CD8-positive, alpha-beta T cell (primary cell): ENCODE measurements at regions of chr14 and their contacts with region 1.

Region 1: GRCh38 chr14:100078991-100079725 is 13.9 kb downstream of the EVL start:
- DNase-seq: peak; percentile 74 to 95 (median 88)
- ATAC-seq: peak; percentile 66
- H3K4me3 ChIP-seq: peak overlapping the region; percentile 27
- H3K4me3 Mint-ChIP-seq: peak overlapping the region; percentile 77
- H3K27ac ChIP-seq: peak overlapping the region; percentile 55 to 63
- H3K27ac Mint-ChIP-seq: peak overlapping the region; percentile 99
- H3K4me1 ChIP-seq: peaks cover 95% of the 10 kb centered on the region
- H3K4me1 Mint-ChIP-seq: peaks cover 97% of the 10 kb centered on the region
- H3K27me3 ChIP-seq: no peaks in the 10 kb centered on the region
- H3K27me3 Mint-ChIP-seq: no peaks in the 10 kb centered on the region
- CTCF ChIP-seq: no peak

Region 2: GRCh38 chr14:99430465-99430864 is 648.7 kb before region 1 on chr14:
- CTCF ChIA-PET with region 1: no interaction called
- POLR2A ChIA-PET with region 1: no interaction called
- intact Hi-C with region 1: no loop called
- DNase-seq: peak in 3 of 9 experiments; percentile 31 to 42 (median 38)
- ATAC-seq: peak; percentile 56
- H3K4me3 ChIP-seq: no peak overlapping the region
- H3K4me3 Mint-ChIP-seq: no peak overlapping the region
- H3K27ac ChIP-seq: no peak overlapping the region
- H3K27ac Mint-ChIP-seq: no peak overlapping the region
- H3K4me1 ChIP-seq: peaks cover 2% of the 10 kb centered on the region
- H3K4me1 Mint-ChIP-seq: peaks cover 23% of the 10 kb centered on the region
- H3K27me3 ChIP-seq: no peaks in the 10 kb centered on the region
- H3K27me3 Mint-ChIP-seq: no peaks in the 10 kb centered on the region
- CTCF ChIP-seq: no peak

Region 3: GRCh38 chr14:100015251-100015655 is 63.9 kb before region 1 on chr14:
- CTCF ChIA-PET with region 1: no interaction called
- POLR2A ChIA-PET with region 1: no interaction called
- intact Hi-C with region 1: no loop called
- DNase-seq: no peak
- ATAC-seq: no peak
- H3K4me3 ChIP-seq: no peak overlapping the region
- H3K4me3 Mint-ChIP-seq: no peak overlapping the region
- H3K27ac ChIP-seq: no peak overlapping the region
- H3K27ac Mint-ChIP-seq: no peak overlapping the region
- H3K4me1 ChIP-seq: no peaks in the 10 kb centered on the region
- H3K4me1 Mint-ChIP-seq: peaks cover 7% of the 10 kb centered on the region
- H3K27me3 ChIP-seq: no peaks in the 10 kb centered on the region
- H3K27me3 Mint-ChIP-seq: no peaks in the 10 kb centered on the region
- CTCF ChIP-seq: no peak

Region 4: GRCh38 chr14:100056964-100057795 is 22.0 kb before region 1 on chr14:
- CTCF ChIA-PET with region 1: interaction called, 51 read pairs
- POLR2A ChIA-PET with region 1: interaction called, 17 read pairs
- intact Hi-C with region 1: no loop called
- DNase-seq: peak in 4 of 9 experiments; percentile 35 to 84 (median 62)
- ATAC-seq: peak; percentile 71
- H3K4me3 ChIP-seq: no peak overlapping the region
- H3K4me3 Mint-ChIP-seq: peak overlapping the region; percentile 21
- H3K27ac ChIP-seq: peak overlapping the region in 1 of 2 experiments; percentile 12
- H3K27ac Mint-ChIP-seq: peak overlapping the region; percentile 94
- H3K4me1 ChIP-seq: peaks cover 57% of the 10 kb centered on the region
- H3K4me1 Mint-ChIP-seq: peaks cover 54% of the 10 kb centered on the region
- H3K27me3 ChIP-seq: no peaks in the 10 kb centered on the region
- H3K27me3 Mint-ChIP-seq: no peaks in the 10 kb centered on the region
- CTCF ChIP-seq: peak; percentile 77

Region 5: DNA sequence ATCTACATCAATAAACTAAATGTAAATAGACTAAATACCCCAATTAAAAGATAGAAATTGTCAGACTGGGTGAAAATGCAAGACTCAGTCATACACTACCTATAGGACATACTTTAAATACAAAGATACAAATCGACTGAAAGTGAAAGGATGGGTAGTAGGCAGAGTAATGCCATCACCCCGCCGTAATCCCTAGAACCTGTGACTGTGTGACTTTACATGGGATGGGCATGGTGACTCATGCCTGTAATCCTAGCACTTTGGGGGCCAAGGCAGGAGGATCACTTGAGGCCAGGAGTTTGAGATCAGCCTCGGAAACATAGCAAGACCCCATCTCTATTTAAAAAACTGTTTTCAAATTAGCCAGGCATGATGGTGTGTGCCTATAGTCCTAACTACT is 16.6 kb before region 1 on chr14:
- CTCF ChIA-PET with region 1: interaction called, 227 read pairs
- POLR2A ChIA-PET with region 1: interaction called, 368 read pairs
- intact Hi-C with region 1: loop called in 1 of 2 experiments (anchors 2 kb)
- DNase-seq: peak in 3 of 9 experiments; percentile 41 to 64 (median 45)
- ATAC-seq: no peak
- H3K4me3 ChIP-seq: peak overlapping the region in 1 of 2 experiments; percentile 19
- H3K4me3 Mint-ChIP-seq: peak overlapping the region; percentile 77
- H3K27ac ChIP-seq: peak overlapping the region; percentile 42 to 83
- H3K27ac Mint-ChIP-seq: peak overlapping the region; percentile 99
- H3K4me1 ChIP-seq: peaks cover 74% of the 10 kb centered on the region
- H3K4me1 Mint-ChIP-seq: peaks cover 81% of the 10 kb centered on the region
- H3K27me3 ChIP-seq: no peaks in the 10 kb centered on the region
- H3K27me3 Mint-ChIP-seq: no peaks in the 10 kb centered on the region
- CTCF ChIP-seq: no peak

Region 6: DNA sequence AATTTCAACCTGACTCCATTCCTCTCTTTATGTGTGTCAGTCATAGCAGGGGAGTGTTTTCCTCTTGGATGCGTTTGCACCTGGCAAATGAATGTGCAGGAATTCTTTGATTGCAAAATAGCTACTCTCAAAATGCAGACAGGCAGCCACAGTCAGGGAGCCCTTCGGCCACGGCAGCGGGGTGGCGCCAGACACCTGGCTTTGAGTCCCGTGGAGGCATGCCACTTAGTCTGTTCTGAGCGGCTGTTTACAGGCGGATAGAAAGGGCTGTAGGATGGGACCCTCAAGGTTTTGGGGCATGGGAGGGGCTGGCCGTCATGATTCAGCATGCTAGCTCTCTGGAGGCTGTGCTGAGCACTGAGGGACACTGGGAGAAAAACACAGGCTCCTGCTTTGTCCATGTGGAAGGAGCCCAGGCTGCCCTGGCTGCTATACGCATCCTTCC is 361.1 kb after region 1 on chr14:
- CTCF ChIA-PET with region 1: no interaction called
- POLR2A ChIA-PET with region 1: no interaction called
- intact Hi-C with region 1: no loop called
- DNase-seq: peak in 7 of 9 experiments; percentile 10 to 58 (median 45)
- ATAC-seq: peak; percentile 40
- H3K4me3 ChIP-seq: no peak overlapping the region
- H3K4me3 Mint-ChIP-seq: no peak overlapping the region
- H3K27ac ChIP-seq: no peak overlapping the region
- H3K27ac Mint-ChIP-seq: no peak overlapping the region
- H3K4me1 ChIP-seq: no peaks in the 10 kb centered on the region
- H3K4me1 Mint-ChIP-seq: no peaks in the 10 kb centered on the region
- H3K27me3 ChIP-seq: no peaks in the 10 kb centered on the region
- H3K27me3 Mint-ChIP-seq: no peaks in the 10 kb centered on the region
- CTCF ChIP-seq: no peak